Endothelial cell of umbilical vein (primary cell): ENCODE measurements at regions of chr19 and their contacts with region 1.

Region 1: DNA sequence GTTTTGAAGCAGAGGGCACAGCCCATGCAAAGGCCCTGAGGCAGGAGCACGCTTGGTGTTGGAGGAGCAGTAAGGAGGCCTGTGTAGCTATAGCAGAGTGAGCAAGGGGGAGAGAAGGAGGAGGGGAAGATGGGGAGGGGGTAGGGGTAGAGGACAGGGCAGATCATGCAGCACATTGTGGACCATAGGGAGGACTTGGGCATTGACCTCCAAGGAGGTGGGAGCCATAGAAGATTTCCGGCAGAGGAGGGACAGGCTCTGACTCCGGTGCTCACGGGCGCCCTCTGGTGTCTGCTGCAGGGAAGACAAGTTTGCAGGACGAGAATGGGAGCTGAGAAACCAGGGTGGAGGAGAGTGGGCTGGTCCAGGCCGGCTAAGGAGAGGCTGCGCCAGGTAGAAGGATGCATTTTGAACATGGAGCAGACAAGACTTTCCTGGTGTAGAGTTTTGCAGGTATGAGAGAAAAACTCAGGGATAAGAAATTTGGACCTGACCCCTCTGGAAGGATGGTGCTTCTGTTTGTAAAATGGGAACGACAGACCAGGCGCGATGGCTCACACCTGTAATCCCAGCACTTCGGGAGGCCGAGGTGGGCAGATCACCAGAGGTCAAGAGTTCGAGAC is 13.7 kb upstream of the CREB3L3 start:
- DNase-seq: peak; percentile 63
- H3K4me3 ChIP-seq: no peak overlapping the region
- H3K27ac ChIP-seq: no peak overlapping the region
- H3K4me1 ChIP-seq: no peaks in the 10 kb centered on the region
- H3K27me3 ChIP-seq: peaks cover 0 to under 1% of the 10 kb centered on the region in 2 experiments
- CTCF ChIP-seq: peak; percentile 90
- POLR2A ChIP-seq: no peak

Region 2: DNA sequence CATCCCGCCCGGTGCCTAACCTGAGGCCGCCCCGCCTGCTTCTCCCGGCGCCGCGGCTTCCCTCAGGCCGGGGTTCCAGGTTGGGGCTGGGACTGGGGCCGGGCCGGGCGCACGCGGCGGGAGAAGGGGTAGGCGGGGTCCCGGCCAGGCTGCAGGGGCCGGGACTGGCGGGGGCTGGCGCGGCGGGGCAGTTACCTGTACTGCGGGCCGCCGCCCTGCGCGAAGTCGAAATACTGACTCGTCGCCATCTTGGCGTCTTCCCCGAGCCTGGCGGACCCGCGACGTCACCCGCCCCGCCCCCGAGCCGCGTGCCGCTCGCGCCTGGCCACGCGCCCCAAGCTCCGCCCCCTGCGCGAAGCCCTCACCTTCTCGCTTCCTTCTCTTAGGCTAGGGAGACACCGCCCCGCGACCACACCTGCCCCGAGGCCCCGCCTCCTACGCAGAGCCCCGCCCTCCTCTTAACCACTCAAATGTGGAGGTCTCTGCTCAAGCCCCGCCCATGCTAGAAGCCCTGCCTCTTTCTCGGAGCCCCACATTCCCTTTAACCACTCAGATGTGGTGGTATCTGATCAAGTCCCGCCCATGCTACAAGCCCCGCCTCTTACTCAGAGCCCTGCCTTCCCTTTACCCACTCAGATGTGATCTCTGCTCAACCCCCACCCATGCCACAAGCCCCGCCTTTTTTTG is 270.8 kb before region 1 on chr19 and contains the start of gene ZFR2:
- CTCF ChIA-PET with region 1: no interaction called
- POLR2A ChIA-PET with region 1: no interaction called
- dilution Hi-C with region 1: no loop called
- intact Hi-C with region 1: no loop called
- DNase-seq: no peak
- H3K4me3 ChIP-seq: no peak within 1 kb of the TSS
- H3K27ac ChIP-seq: no peak within 1 kb of the TSS
- H3K4me1 ChIP-seq: no peaks in the 10 kb centered on the region
- H3K27me3 ChIP-seq: peaks cover 15 to 19% of the 10 kb centered on the region in 2 experiments
- CTCF ChIP-seq: no peak
- POLR2A ChIP-seq: no peak
- total RNA-seq, gene ZFR2: not detected in 2 replicates

Region 3: DNA sequence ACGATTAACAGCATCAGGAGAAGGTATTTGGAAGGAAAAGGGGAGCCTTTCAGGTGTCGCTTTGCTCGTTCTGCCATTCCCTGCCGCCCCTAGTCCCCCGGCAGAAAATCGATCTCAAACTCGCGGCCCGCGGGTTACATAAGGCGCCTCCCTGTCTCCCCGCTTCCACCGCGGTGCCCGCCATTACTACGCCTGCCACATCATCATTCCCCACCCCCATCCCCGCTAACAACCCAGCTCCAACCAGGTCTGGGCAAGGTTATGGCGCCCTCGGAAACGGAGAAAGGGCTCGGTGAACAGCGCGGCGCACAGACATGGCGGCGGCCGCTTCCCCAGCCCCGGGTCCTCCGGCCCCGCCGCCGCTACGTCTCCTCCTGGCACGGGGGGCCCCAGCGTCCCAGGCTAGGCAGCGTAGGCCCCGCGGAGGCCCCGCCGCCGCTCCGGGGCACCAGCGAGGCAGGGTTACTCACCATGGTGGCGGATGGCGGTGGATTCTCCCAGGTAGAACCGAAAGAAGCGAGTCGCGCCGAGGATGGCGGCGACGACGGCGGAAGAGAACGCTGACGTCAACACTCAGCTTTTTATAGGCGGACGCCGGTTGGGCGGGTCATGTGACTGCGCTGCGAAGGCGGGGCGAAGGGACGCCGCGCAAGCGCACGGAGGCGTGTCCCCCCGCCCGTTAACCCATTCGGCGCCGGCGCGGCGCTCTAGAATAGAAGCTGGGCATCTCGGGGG is 154.7 kb before region 1 on chr19 and contains the start of gene EEF2:
- CTCF ChIA-PET with region 1: interaction called, 28 read pairs
- POLR2A ChIA-PET with region 1: interaction called, 3 read pairs
- dilution Hi-C with region 1: no loop called
- intact Hi-C with region 1: no loop called
- DNase-seq: peak; percentile 86
- H3K4me3 ChIP-seq: peak within 1 kb of the TSS; percentile 63 to 98 (median 97)
- H3K27ac ChIP-seq: peak within 1 kb of the TSS; percentile 90
- H3K4me1 ChIP-seq: peaks cover 31% of the 10 kb centered on the region
- H3K27me3 ChIP-seq: no peaks in the 10 kb centered on the region
- CTCF ChIP-seq: no peak
- POLR2A ChIP-seq: peak; percentile 99
- total RNA-seq, gene EEF2: 2,318 and 2,351 TPM in 2 replicates

Region 4: DNA sequence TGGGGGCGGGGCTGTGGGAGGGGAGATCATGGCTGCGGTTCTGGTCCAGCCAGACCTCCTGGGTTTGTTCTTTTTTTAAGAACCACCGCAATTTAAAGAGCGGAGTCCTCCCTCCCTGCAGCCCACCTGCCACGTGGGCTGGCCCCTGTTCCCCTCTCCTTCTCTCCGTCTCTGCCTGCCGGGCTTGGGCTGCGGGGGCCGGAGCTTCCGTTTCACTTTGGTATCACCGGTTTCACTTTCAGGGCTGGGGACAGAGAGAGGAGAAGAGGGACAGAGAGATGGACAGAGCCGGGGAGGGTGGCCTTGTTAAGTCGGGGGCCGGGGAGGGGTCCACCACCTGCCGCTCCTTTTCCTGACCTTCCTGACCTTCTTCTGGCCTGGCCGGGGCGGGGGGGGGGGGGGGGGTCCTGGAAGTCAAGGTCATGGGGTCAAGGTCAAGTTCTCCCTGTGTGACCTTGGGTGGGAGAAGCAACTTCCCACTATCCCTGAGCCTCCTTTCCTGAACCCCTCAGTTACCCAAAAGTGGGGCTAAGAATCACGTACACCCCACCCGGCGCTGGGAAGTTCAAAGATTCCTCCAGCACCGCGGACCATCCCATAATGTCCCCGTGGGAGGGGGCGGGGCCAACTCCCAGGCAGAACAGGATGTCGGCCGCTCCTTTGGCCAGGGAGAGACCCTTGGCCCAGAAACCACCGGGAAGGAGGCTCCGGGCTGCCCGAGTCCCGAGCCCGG is 61.7 kb before region 1 on chr19:
- CTCF ChIA-PET with region 1: interaction called, 13 read pairs
- POLR2A ChIA-PET with region 1: interaction called, 4 read pairs
- dilution Hi-C with region 1: no loop called
- intact Hi-C with region 1: no loop called
- DNase-seq: peak; percentile 25
- H3K4me3 ChIP-seq: peak overlapping the region; percentile 29 to 52 (median 43)
- H3K27ac ChIP-seq: no peak overlapping the region
- H3K4me1 ChIP-seq: peaks cover 6% of the 10 kb centered on the region
- H3K27me3 ChIP-seq: no peaks in the 10 kb centered on the region
- CTCF ChIP-seq: no peak
- POLR2A ChIP-seq: no peak

Region 5: GRCh38 chr19:4123615-4124568 is 15.8 kb before region 1 on chr19 and contains the start of gene MAP2K2:
- CTCF ChIA-PET with region 1: interaction called, 79 read pairs
- POLR2A ChIA-PET with region 1: no interaction called
- dilution Hi-C with region 1: no loop called
- intact Hi-C with region 1: loop called (anchors 1 kb)
- DNase-seq: peak; percentile 89
- H3K4me3 ChIP-seq: peak within 1 kb of the TSS; percentile 89 to 96 (median 94)
- H3K27ac ChIP-seq: peak within 1 kb of the TSS; percentile 66
- H3K4me1 ChIP-seq: peaks cover 14% of the 10 kb centered on the region
- H3K27me3 ChIP-seq: no peaks in the 10 kb centered on the region
- CTCF ChIP-seq: no peak
- POLR2A ChIP-seq: peak; percentile 92
- total RNA-seq, gene MAP2K2: 171 TPM in 2 replicates

Region 6: DNA sequence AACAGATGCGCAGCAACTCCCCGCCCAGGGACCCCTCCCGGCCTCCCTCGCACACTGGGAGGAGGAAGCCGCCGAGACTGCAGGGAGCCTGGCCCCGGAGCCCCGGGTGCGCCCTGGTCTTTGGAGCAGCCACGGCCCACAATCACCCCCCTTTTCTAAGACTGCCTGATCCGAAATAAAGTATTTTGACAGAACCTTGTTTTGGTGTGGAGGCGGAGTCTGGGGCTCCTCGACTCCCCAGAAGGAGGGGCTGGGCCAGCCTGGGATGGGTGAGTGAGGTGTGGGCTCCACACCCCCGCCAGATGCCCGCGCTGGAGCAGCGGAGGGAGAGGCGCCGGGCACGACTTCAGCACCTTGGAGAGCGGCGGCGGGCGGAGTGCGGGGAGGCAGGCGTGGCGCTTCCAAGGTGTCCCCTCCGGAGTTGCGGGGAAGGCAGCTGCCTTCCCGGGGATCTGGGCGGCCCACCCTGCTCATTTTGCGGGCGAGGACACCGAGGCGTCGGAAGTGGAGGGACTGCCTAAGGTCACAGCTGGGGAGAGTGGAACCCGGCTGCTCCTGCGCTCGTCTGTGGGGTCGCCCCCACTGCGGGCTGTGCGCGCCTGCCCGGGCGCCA is 33.2 kb after region 1 on chr19:
- CTCF ChIA-PET with region 1: interaction called, 10 read pairs
- POLR2A ChIA-PET with region 1: no interaction called
- dilution Hi-C with region 1: no loop called
- intact Hi-C with region 1: no loop called
- DNase-seq: no peak
- H3K4me3 ChIP-seq: no peak overlapping the region
- H3K27ac ChIP-seq: no peak overlapping the region
- H3K4me1 ChIP-seq: no peaks in the 10 kb centered on the region
- H3K27me3 ChIP-seq: peaks cover 0 to 2% of the 10 kb centered on the region in 2 experiments
- CTCF ChIP-seq: no peak
- POLR2A ChIP-seq: no peak

Region 7: GRCh38 chr19:4208385-4209094 is 68.8 kb after region 1 on chr19:
- CTCF ChIA-PET with region 1: interaction called, 14 read pairs
- POLR2A ChIA-PET with region 1: no interaction called
- dilution Hi-C with region 1: no loop called
- intact Hi-C with region 1: loop called (anchors 1 kb)
- DNase-seq: no peak
- H3K4me3 ChIP-seq: no peak overlapping the region
- H3K27ac ChIP-seq: no peak overlapping the region
- H3K4me1 ChIP-seq: no peaks in the 10 kb centered on the region
- H3K27me3 ChIP-seq: no peaks in the 10 kb centered on the region
- CTCF ChIP-seq: peak; percentile 37 to 74
- POLR2A ChIP-seq: no peak